ENCODE measurements at regions of chr13 and their contacts with region 1.

Region 1: GRCh38 chr13:44191504-44192171 is 182.0 kb upstream of the SERP2 start:
- DNase-seq: peak in 1 of 2 donors; percentile 71
- ATAC-seq: peak; percentile 76 to 97 (median 95)
- H3K4me3 ChIP-seq: peak overlapping the region in 3 of 10 donors; percentile 21
- H3K27ac ChIP-seq: peak overlapping the region in 6 of 10 donors; percentile 10 to 62 (median 51)
- H3K4me1 ChIP-seq: peaks cover 0 to 11% (median 0%) of the 10 kb centered on the region in 9 donors
- H3K27me3 ChIP-seq: no peaks in the 10 kb centered on the region
- CTCF ChIP-seq: peak; percentile 51 to 80 (median 70)

Region 2: DNA sequence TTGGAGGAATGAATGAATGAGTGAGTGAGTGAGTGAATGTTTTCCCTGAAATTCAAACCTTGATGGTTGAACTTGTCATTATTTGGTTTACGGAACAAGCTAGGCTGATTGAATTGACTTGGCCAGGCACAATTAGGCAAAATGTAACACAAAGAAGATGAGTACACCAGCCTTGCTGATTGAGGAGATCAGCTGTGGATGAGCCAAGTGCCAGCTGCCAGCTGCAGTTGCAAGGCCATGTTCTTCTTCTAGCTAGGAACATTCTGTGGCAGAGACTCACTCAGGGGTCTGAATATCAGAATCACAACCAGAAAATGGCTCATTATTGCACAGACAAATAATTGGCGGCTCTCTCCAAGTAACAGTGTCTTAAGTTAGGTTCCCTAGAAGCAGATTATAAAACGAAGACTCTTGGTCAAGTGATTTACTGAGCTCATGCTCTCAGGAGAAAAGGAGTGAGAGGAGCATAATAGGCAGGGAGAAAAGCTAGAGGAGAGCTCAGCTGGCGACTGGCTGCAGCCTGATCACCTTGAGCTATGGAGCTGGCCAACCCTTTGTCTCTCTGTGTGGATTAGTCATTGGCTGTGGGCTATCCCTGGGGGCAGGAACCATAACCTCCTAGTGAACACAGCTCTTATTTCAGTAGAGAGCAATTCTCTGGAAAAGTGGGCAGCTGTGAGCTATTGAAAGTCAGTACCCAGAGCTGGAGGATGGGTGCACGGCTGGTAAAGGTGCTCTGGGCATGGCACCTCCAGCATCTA is 43.3 kb before region 1 on chr13:
- intact Hi-C with region 1: loop called in 3 of 10 experiments (anchors 5 kb)
- DNase-seq: no peak
- ATAC-seq: no peak
- H3K4me3 ChIP-seq: no peak overlapping the region
- H3K27ac ChIP-seq: no peak overlapping the region
- H3K4me1 ChIP-seq: peaks cover 0 to 15% (median 2%) of the 10 kb centered on the region in 9 donors
- H3K27me3 ChIP-seq: no peaks in the 10 kb centered on the region
- CTCF ChIP-seq: no peak

Region 3: DNA sequence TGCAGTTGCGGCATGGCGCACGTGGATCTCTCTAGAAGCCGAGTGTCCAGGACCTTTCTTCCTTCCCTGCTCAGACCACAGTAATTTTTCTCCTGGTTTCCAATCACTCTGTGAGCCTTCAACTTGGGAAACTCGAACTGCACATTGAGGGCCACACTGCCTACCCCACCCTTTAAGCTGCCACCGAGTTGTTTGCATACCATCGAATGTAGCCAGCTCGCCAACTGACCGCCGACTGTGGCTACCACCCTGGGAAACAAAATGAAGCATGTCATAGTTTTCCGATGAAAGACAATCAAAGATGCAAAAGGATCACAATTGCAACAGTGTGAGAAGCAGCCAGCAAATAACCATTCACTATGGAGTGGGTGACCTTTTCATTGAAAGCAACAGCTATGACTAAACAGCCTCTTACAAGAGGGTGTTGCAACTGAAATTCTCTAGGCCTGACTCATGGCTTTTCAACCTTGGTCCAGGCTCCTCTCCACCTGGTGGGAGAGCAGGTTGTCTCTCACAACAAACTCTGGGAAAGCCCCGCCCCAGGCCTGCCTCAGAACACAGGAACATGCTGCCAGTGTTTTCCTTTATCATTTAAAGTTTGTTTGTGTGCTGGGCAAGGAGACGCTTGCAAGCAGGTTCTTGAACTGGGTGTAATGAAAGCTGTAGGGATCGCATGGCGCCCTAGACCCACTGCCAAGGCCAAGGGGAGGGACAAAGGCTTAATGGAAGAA is 40.3 kb after region 1 on chr13:
- intact Hi-C with region 1: loop called in 4 of 10 experiments (anchors 5 kb)
- DNase-seq: peak in 1 of 2 donors; percentile 27
- ATAC-seq: peak in 4 of 8 donors; percentile 67 to 97 (median 83)
- H3K4me3 ChIP-seq: no peak overlapping the region
- H3K27ac ChIP-seq: peak overlapping the region in 2 of 10 donors; percentile 8 to 63
- H3K4me1 ChIP-seq: peaks cover 9 to 29% (median 14%) of the 10 kb centered on the region in 9 donors
- H3K27me3 ChIP-seq: no peaks in the 10 kb centered on the region
- CTCF ChIP-seq: peak in 1 of 9 donors; percentile 11